Naive thymus-derived CD4-positive, alpha-beta T cell (primary cell): ENCODE measurements at regions of chr7 and their contacts with region 1.

Region 1: GRCh38 chr7:132368246-132368900 is 207.9 kb downstream of the PLXNA4 start:
- DNase-seq: no peak
- ATAC-seq: no peak
- H3K4me3 ChIP-seq: no peak overlapping the region
- H3K4me3 Mint-ChIP-seq: no peak overlapping the region
- H3K27ac ChIP-seq: no peak overlapping the region
- H3K27ac Mint-ChIP-seq: peak overlapping the region in 1 of 9 donors; percentile 26
- H3K4me1 ChIP-seq: no peaks in the 10 kb centered on the region
- H3K4me1 Mint-ChIP-seq: no peaks in the 10 kb centered on the region
- H3K27me3 ChIP-seq: no peaks in the 10 kb centered on the region
- H3K27me3 Mint-ChIP-seq: peaks cover 10 to 25% (median 20%) of the 10 kb centered on the region in 5 donors

Region 2: DNA sequence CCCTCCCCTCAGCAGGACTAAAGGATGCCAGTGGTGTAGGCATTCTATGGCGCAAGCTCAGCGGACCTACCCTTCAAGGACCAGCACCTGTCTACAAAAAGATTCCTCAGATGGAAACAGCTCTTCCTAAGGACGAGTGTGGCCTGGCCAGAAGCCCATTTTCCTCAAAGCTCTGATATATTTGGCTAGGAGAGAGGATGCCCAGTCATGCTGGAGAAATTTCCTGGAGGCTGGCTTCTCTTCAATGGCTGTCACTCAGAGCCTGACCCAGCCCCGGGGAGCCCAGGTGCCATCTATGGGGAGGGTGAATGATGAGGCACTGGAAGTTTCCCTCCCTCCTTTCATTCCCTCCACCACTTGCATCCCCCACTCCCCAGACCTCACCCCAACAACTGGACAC is 96.4 kb after region 1 on chr7:
- CTCF ChIA-PET with region 1: no interaction called
- POLR2A ChIA-PET with region 1: no interaction called
- intact Hi-C with region 1: no loop called
- DNase-seq: no peak
- ATAC-seq: no peak
- H3K4me3 ChIP-seq: no peak overlapping the region
- H3K4me3 Mint-ChIP-seq: no peak overlapping the region
- H3K27ac ChIP-seq: no peak overlapping the region
- H3K27ac Mint-ChIP-seq: peak overlapping the region in 1 of 9 donors; percentile 20
- H3K4me1 ChIP-seq: peaks cover 10 to 16% of the 10 kb centered on the region in 2 donors
- H3K4me1 Mint-ChIP-seq: peaks cover 20 to 65% (median 29%) of the 10 kb centered on the region in 7 donors
- H3K27me3 ChIP-seq: no peaks in the 10 kb centered on the region
- H3K27me3 Mint-ChIP-seq: peaks cover 0 to 21% (median 0%) of the 10 kb centered on the region in 5 donors

Region 3: DNA sequence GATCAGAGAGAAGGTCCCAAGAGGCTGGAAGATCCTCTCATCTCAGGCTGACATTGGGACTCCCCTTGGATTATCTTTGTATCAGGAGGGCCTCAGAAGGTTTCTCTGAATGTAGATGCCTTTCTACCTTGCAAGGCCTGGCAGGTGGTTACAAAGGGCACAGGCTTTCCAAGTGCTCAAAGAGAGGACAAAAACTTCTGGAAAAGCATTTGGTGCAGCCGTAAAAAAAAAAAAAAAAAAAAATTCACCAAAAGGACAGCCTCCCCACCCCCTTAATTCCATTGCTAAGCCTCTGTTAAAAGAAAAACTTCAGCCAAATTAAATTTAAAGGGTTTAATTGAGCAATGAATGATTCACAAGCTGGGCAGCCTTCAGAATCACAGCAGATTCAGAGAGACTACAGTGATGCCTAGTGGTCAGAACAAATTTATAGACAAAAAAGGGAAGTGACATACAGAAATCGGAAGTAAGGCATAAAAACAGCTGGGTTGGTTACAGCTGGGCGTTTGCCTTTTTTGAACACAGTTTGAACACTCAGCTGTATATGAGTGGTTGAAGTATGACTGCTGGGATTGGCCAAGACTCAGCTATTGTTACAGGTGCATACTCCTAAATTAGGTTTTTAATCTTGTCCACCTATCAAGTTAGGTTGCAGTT is 1716.2 kb after region 1 on chr7:
- CTCF ChIA-PET with region 1: no interaction called
- POLR2A ChIA-PET with region 1: no interaction called
- intact Hi-C with region 1: loop called in 1 of 2 experiments (anchors 5 kb)
- DNase-seq: no peak
- ATAC-seq: peak; percentile 75
- H3K4me3 ChIP-seq: no peak overlapping the region
- H3K4me3 Mint-ChIP-seq: no peak overlapping the region
- H3K27ac ChIP-seq: no peak overlapping the region
- H3K27ac Mint-ChIP-seq: no peak overlapping the region
- H3K4me1 ChIP-seq: no peaks in the 10 kb centered on the region
- H3K4me1 Mint-ChIP-seq: peaks cover 0 to 3% (median 0%) of the 10 kb centered on the region in 7 donors
- H3K27me3 ChIP-seq: no peaks in the 10 kb centered on the region
- H3K27me3 Mint-ChIP-seq: peaks cover 0 to 5% (median 0%) of the 10 kb centered on the region in 5 donors